HCT116 (cell line): ENCODE measurements at regions of chr6 and their contacts with region 1.

Region 1: GRCh38 chr6:35152067-35152707 is 11.0 kb upstream of the TCP11 start:
- DNase-seq: peak; percentile 7
- ATAC-seq: peak; percentile 44; the same call in 1 of the 2 replicates
- H3K4me3 ChIP-seq: no peak overlapping the region
- H3K27ac ChIP-seq: no peak overlapping the region
- H3K4me1 ChIP-seq: peaks cover 0 to 21% of the 10 kb centered on the region in 2 experiments; a peak in 2 of 4 replicates
- H3K27me3 ChIP-seq: no peaks in the 10 kb centered on the region
- CTCF ChIP-seq: no peak
- POLR2A ChIP-seq: no peak
- RAD21 ChIP-seq: no peak

Region 2: GRCh38 chr6:35247642-35248231 is 95.5 kb after region 1 on chr6:
- CTCF ChIA-PET with region 1: no interaction called
- POLR2A ChIA-PET with region 1: no interaction called
- RAD21 ChIA-PET with region 1: interaction called in 1 of 2 experiments, 11 read pairs
- intact Hi-C with region 1: no loop called
- DNase-seq: no peak
- ATAC-seq: no peak
- H3K4me3 ChIP-seq: no peak overlapping the region
- H3K27ac ChIP-seq: no peak overlapping the region
- H3K4me1 ChIP-seq: peaks cover 0 to 7% of the 10 kb centered on the region in 2 experiments; a peak in 1 of 4 replicates
- H3K27me3 ChIP-seq: no peaks in the 10 kb centered on the region
- CTCF ChIP-seq: no peak
- POLR2A ChIP-seq: no peak
- RAD21 ChIP-seq: no peak